GM12878 (cell line): ENCODE measurements at regions of chr5 and their contacts with region 1.

Region 1: DNA sequence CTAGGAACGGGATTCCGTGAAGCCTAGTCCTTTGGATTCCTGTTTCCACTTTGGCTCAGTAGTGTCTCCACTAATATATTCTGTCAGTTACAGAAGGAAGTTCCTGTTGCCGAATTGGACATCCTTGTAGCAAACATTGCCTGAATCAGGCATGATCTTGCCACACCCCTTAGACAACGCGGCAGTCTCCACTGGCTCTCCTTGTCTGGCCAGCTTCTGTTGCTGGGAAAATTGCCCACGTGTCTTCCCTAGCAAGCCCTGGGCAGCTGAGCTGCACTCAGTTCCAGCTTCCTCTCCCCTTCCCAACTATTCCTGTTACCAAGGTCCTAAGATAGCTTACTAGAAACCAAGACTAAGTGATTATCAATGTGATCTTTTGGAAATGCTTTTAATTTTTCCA is 316.6 kb upstream of the RIOK2 start:
- DNase-seq: no peak
- ATAC-seq: no peak
- H3K4me3 ChIP-seq: no peak overlapping the region
- H3K27ac ChIP-seq: no peak overlapping the region
- H3K4me1 ChIP-seq: no peaks in the 10 kb centered on the region
- H3K27me3 ChIP-seq: no peaks in the 10 kb centered on the region
- CTCF ChIP-seq: no peak
- EP300 ChIP-seq: no peak
- POLR2A ChIP-seq: no peak
- RAD21 ChIP-seq: no peak

Region 2: GRCh38 chr5:97192580-97193358 is 306.8 kb before region 1 on chr5:
- CTCF ChIA-PET with region 1: no interaction called
- POLR2A ChIA-PET with region 1: no interaction called
- RAD21 ChIA-PET with region 1: no interaction called
- SMC1A ChIA-PET with region 1: no interaction called
- in situ Hi-C with region 1: no loop called
- intact Hi-C with region 1: no loop called
- DNase-seq: peak; percentile 63
- ATAC-seq: peak; percentile 94
- H3K4me3 ChIP-seq: 0 out of 2 replicates have a peak overlapping the region, but pooled peaks have one; percentile 32
- H3K27ac ChIP-seq: peak overlapping the region; percentile 73
- H3K4me1 ChIP-seq: peaks cover 8% of the 10 kb centered on the region
- H3K27me3 ChIP-seq: no peaks in the 10 kb centered on the region
- CTCF ChIP-seq: no peak
- EP300 ChIP-seq: peak; percentile 28 to 49; a peak in 1 of 4 replicates
- POLR2A ChIP-seq: no peak
- RAD21 ChIP-seq: no peak

Region 3: DNA sequence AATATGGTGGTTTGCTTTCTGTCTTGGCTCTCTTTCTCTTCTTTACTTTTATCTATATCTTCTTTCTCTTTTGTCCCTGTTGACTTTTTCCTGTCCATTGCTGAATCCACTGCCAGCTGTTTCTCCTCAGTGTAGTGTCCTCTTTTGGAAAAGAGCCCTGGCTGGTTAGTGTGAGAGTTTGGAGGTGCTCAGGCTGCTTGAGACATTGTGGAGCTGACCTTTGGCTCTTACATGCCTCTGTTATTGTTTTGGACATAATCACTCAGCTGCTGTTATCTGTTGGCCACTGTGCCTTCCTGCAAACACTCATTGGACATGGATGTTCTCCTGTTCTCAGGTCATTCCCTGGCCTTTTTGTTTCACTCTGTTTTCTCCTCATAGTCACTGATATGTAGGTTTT is 21.1 kb before region 1 on chr5:
- CTCF ChIA-PET with region 1: interaction called, 3 read pairs
- POLR2A ChIA-PET with region 1: interaction called, 8 read pairs
- RAD21 ChIA-PET with region 1: interaction called, 5 read pairs
- SMC1A ChIA-PET with region 1: interaction called, 38 read pairs
- in situ Hi-C with region 1: no loop called
- intact Hi-C with region 1: no loop called
- DNase-seq: no peak
- ATAC-seq: no peak
- H3K4me3 ChIP-seq: no peak overlapping the region
- H3K27ac ChIP-seq: peak overlapping the region; percentile 9; the same call in 1 of the 2 replicates
- H3K4me1 ChIP-seq: peaks cover 20% of the 10 kb centered on the region
- H3K27me3 ChIP-seq: no peaks in the 10 kb centered on the region
- CTCF ChIP-seq: no peak
- EP300 ChIP-seq: no peak
- POLR2A ChIP-seq: no peak
- RAD21 ChIP-seq: no peak

Region 4: GRCh38 chr5:97838214-97838613 is 338.6 kb after region 1 on chr5:
- CTCF ChIA-PET with region 1: no interaction called
- POLR2A ChIA-PET with region 1: no interaction called
- RAD21 ChIA-PET with region 1: no interaction called
- SMC1A ChIA-PET with region 1: no interaction called
- in situ Hi-C with region 1: no loop called
- intact Hi-C with region 1: no loop called
- DNase-seq: peak; percentile 58
- ATAC-seq: peak; percentile 96
- H3K4me3 ChIP-seq: no peak overlapping the region
- H3K27ac ChIP-seq: no peak overlapping the region
- H3K4me1 ChIP-seq: no peaks in the 10 kb centered on the region
- H3K27me3 ChIP-seq: no peaks in the 10 kb centered on the region
- CTCF ChIP-seq: no peak
- EP300 ChIP-seq: peak; percentile 84 to 93
- POLR2A ChIP-seq: no peak
- RAD21 ChIP-seq: no peak

Region 5: DNA sequence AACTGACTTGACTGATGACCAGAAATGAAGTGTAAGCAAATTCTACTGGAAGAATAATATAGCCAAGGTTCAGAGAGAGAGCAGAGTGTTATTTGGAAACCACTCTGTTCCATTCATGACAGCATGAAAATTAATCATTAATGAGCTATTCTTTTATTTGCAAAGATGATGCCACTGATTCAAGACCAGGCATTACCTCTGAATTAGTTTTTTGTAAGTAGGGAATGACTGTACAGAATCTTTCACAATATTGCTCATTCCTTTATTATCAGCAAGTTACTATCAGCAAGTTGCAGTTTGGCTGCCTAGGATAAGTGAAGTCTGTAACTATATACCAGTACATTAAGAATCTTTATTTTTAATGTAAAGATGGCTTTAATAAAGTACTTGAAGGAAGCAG is 1198.8 kb after region 1 on chr5:
- CTCF ChIA-PET with region 1: no interaction called
- POLR2A ChIA-PET with region 1: no interaction called
- RAD21 ChIA-PET with region 1: no interaction called
- SMC1A ChIA-PET with region 1: no interaction called
- in situ Hi-C with region 1: no loop called
- intact Hi-C with region 1: no loop called
- DNase-seq: no peak
- ATAC-seq: no peak
- H3K4me3 ChIP-seq: no peak overlapping the region
- H3K27ac ChIP-seq: no peak overlapping the region
- H3K4me1 ChIP-seq: no peaks in the 10 kb centered on the region
- H3K27me3 ChIP-seq: no peaks in the 10 kb centered on the region
- CTCF ChIP-seq: no peak
- EP300 ChIP-seq: no peak
- POLR2A ChIP-seq: no peak
- RAD21 ChIP-seq: no peak